A673 (cell line): ENCODE measurements at regions of chr6 and their contacts with region 1.

Region 1: DNA sequence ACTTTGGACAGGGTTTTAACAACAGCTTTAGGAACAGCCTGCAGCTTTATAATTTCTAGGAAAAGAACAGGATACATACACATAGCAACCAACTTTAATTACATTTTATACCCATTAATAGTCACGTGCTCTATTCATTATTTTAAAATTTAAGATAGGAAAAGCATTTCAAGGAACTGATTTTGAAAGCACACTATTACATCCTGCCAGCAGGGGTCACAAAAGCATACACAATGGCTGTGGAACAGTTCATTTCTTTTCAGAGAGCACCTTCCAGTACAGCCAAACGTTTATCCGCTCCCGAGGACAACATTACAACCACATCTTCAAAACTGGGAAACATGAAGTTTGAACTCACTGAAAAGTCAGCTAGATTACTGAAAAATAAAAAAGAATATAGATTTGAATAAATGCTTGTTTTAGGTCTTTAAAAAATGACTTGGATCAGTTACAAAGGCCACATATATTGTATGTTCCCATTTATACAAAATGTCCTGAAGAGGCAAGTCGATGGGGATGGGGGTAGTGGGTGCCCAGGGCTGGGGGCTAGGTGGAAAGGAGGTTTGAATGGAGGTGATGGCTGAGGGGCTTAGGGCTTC is 104.6 kb upstream of the EXOC2 start:
- DNase-seq: peak; percentile 62
- H3K4me3 ChIP-seq: no peak overlapping the region
- H3K27ac ChIP-seq: no peak overlapping the region
- H3K4me1 ChIP-seq: no peaks in the 10 kb centered on the region
- H3K27me3 ChIP-seq: peaks cover 88% of the 10 kb centered on the region
- CTCF ChIP-seq: peak; percentile 75

Region 2: GRCh38 chr6:296151-297122 is 501.1 kb before region 1 on chr6:
- CTCF ChIA-PET with region 1: no interaction called
- POLR2A ChIA-PET with region 1: interaction called, 11 read pairs
- intact Hi-C with region 1: no loop called
- DNase-seq: no peak
- H3K4me3 ChIP-seq: no peak overlapping the region
- H3K27ac ChIP-seq: no peak overlapping the region
- H3K4me1 ChIP-seq: no peaks in the 10 kb centered on the region
- H3K27me3 ChIP-seq: no peaks in the 10 kb centered on the region
- CTCF ChIP-seq: no peak

Region 3: GRCh38 chr6:912871-913835 is 115.6 kb after region 1 on chr6:
- CTCF ChIA-PET with region 1: no interaction called
- POLR2A ChIA-PET with region 1: no interaction called
- intact Hi-C with region 1: no loop called
- DNase-seq: no peak
- H3K4me3 ChIP-seq: no peak overlapping the region
- H3K27ac ChIP-seq: no peak overlapping the region
- H3K4me1 ChIP-seq: no peaks in the 10 kb centered on the region
- H3K27me3 ChIP-seq: no peaks in the 10 kb centered on the region
- CTCF ChIP-seq: no peak

Region 4: GRCh38 chr6:1381481-1382330 is 584.1 kb after region 1 on chr6:
- CTCF ChIA-PET with region 1: interaction called, 3 read pairs
- POLR2A ChIA-PET with region 1: no interaction called
- intact Hi-C with region 1: loop called (anchors 5 kb)
- DNase-seq: peak; percentile 60
- H3K4me3 ChIP-seq: peak overlapping the region; percentile 27
- H3K27ac ChIP-seq: no peak overlapping the region
- H3K4me1 ChIP-seq: no peaks in the 10 kb centered on the region
- H3K27me3 ChIP-seq: peaks cover 99% of the 10 kb centered on the region
- CTCF ChIP-seq: peak; percentile 68

Region 5: DNA sequence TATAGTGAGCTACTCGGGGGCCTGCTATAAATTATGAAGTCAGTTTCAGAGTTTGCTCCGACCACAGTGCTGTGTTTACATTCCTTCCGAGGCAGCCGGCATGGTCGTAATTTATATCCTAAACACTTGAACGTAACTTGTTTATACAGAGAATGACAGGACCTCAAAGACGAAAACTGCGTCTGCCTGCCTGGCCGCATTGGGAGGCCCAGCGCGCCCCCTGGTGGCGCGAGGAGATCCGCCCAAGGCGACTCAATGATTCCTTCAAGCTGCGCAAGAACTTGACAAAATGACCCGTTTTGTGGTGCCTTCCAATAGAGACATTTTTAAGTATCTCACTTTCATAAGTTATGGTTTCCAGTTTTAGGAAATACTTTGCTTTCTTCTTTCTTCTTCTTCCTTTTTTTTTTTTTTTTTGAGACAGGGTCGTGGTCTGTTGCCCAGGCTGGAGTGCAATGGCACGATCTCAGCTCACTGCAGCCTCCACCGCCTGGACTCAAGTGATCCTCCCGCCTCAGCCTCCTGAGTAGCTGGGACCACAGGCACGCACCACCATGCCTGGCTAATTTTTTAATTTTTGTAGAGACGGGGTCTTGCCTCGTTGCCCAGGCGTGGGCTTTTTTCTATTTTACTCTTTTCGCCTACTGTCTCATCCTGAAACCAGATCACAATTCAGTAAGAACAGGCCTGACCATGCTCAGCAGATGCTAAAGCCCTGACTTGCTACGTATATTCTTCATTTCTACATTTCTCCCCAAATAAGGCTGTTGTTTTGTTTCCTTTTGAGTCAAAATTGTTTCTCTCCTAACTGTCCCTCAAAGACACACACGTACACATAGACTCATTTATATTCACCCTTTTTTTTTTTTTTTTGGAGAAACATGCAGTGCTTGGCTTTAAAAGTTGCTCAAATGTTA is 599.6 kb after region 1 on chr6:
- CTCF ChIA-PET with region 1: no interaction called
- POLR2A ChIA-PET with region 1: no interaction called
- intact Hi-C with region 1: loop called (anchors 2 kb)
- DNase-seq: peak; percentile 78
- H3K4me3 ChIP-seq: no peak overlapping the region
- H3K27ac ChIP-seq: no peak overlapping the region
- H3K4me1 ChIP-seq: no peaks in the 10 kb centered on the region
- H3K27me3 ChIP-seq: peaks cover 41% of the 10 kb centered on the region
- CTCF ChIP-seq: peak; percentile 97

Region 6: DNA sequence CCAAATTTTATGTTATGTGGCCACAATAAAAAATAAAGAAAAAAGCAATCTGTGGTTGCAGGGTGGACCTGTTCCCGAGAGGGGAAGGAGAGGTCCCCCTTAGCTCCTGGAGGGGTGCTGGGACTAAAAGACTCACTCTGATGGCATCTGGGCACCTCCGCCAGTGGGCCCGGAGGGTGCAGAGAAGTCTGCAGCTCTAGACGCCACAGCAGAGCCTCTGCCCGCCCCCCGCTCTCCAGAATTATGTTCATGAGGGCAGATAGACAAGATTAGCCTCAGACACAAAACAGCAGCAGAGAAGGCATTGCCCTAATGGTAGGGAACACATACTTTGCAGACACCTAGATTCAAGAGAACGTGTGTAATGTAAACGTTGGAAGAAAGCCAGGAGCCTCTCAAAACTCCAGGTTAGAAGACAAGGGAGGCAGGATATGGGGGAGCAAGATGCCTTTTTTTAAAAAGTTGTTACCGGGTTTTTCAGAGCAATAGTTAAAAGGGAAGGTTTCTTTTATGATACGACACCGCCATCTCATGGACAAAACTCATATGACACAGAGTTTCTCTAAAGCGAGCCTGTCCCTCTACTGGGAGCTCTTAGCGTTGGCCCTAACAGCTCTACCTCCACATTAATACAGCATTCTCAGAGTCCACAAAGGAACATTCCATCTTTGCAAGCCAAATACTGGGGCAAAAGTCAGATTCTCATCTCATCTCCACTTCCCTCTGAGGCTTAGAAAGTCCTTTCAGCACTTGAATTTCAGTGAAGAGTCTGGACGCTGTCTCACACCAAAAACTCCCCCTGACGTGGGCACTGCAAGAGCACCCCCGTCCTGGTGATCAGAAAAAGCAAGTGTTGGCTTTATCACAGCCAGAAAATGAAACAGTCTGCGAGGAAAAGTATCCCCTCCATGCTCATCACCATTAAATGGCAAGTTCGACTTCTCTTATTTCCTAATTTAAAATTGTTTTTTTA is 639.0 kb after region 1 on chr6:
- CTCF ChIA-PET with region 1: no interaction called
- POLR2A ChIA-PET with region 1: no interaction called
- intact Hi-C with region 1: loop called (anchors 5 kb)
- DNase-seq: peak; percentile 80
- H3K4me3 ChIP-seq: no peak overlapping the region
- H3K27ac ChIP-seq: no peak overlapping the region
- H3K4me1 ChIP-seq: no peaks in the 10 kb centered on the region
- H3K27me3 ChIP-seq: peaks cover 32% of the 10 kb centered on the region
- CTCF ChIP-seq: peak; percentile 75